ENCODE measurements at regions of chr19 and their contacts with region 1.

Region 1: DNA sequence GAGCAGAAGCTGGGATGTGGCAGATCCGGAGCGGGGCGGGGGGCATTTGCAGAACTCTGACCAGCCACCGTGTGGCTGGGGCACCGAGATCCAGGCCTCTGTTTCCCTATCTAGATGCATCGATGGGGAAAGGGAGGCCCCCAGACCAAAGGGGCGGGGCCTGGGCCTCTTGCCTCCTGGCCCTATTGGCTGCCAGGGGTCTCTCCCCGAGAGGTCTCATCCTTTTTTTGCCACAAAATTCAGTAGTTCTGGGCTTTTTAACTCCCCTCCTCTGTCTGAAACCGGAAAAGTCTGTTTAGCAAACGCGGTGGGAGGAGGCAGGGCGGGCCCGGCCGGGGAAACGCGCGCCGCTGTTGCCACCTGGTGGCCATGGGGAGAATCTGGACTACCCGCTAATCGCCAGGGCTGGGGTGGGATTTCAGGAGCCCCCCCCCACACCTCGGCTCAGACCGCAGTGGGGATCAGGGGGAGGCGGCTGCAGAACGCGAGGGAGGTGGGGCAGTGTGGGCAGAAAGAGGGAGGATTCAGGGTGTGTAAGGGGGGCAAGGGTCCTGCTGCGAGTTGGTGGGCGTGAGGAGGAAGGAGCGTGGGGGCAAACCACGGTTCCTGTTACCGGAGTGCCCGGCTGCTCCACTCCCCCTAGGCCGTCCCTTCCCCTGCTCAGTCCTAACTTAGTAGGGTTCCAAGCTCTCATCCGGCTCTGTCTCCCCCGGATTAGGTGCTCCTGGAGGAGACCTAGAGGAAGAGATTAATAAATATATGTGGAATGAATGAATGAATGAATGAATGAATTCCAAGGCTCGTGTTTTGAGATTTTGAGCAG is 28.3 kb downstream of the IL12RB1 start:
- DNase-seq: peak; percentile 72 to 88 (median 74)
- H3K4me3 ChIP-seq: no peak overlapping the region
- H3K4me3 Mint-ChIP-seq: peak overlapping the region in 3 of 7 donors; percentile 32 to 76 (median 42)
- H3K27ac ChIP-seq: peak overlapping the region; percentile 38
- H3K27ac Mint-ChIP-seq: peak overlapping the region in 7 of 8 donors; percentile 68 to 92 (median 84)
- H3K4me1 ChIP-seq: peaks cover 13% of the 10 kb centered on the region
- H3K4me1 Mint-ChIP-seq: peaks cover 7 to 15% (median 8%) of the 10 kb centered on the region in 3 donors
- H3K27me3 ChIP-seq: no peaks in the 10 kb centered on the region
- H3K27me3 Mint-ChIP-seq: peaks cover 0 to 1% of the 10 kb centered on the region in 2 donors

Region 2: DNA sequence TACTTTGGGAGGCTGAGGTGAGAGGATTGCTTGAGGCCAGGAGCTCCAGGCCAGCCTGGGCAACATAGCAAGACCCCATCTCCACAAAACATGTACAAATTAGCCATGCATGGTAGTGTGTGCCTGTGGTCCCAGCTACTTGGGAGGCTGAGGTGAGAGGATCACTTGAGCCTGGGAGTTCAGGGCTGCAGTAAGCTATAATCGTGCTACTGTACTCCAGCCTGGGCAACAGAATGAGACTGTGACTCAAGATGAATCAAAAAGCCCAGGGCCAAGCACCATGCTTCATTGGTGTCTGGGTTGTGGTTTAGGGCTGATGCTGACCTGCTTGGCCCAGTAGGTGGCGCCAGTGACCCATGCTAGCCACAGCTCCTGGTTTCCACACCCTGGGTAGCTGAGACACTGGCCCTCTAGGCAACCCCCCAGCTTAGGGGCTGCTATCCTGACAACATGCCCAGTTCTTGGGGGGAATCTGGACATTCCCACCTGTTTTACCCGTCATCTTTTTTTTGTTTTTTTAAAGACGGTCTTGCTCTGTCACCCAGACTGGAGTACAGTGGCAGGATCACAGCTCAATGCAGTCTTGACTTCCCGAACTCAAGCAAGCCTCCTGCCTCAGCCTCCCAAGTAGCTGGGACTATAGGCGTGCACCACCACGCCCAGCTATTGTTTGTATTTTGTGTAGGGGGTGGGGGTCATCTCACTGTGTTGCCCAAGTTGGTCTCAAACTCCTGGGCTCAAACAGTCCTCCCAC is 120.2 kb before region 1 on chr19:
- CTCF ChIA-PET with region 1: interaction called, 14 read pairs
- POLR2A ChIA-PET with region 1: no interaction called
- DNase-seq: peak; percentile 71 to 86 (median 76)
- H3K4me3 ChIP-seq: no peak overlapping the region
- H3K4me3 Mint-ChIP-seq: peak overlapping the region in 1 of 7 donors; percentile 26
- H3K27ac ChIP-seq: no peak overlapping the region
- H3K27ac Mint-ChIP-seq: peak overlapping the region in 2 of 8 donors; percentile 65 to 73
- H3K4me1 ChIP-seq: peaks cover 6% of the 10 kb centered on the region
- H3K4me1 Mint-ChIP-seq: peaks cover 7 to 17% (median 10%) of the 10 kb centered on the region in 3 donors
- H3K27me3 ChIP-seq: no peaks in the 10 kb centered on the region
- H3K27me3 Mint-ChIP-seq: no peaks in the 10 kb centered on the region

Region 3: GRCh38 chr19:18000935-18001778 is 57.3 kb before region 1 on chr19:
- CTCF ChIA-PET with region 1: interaction called, 168 read pairs
- POLR2A ChIA-PET with region 1: interaction called, 4 read pairs
- DNase-seq: peak; percentile 94 to 98 (median 98)
- H3K4me3 ChIP-seq: peak overlapping the region; percentile 90
- H3K4me3 Mint-ChIP-seq: peak overlapping the region; percentile 81 to 95 (median 90)
- H3K27ac ChIP-seq: peak overlapping the region; percentile 88
- H3K27ac Mint-ChIP-seq: peak overlapping the region; percentile 93 to 100 (median 98)
- H3K4me1 ChIP-seq: peaks cover 21% of the 10 kb centered on the region
- H3K4me1 Mint-ChIP-seq: peaks cover 19 to 44% (median 19%) of the 10 kb centered on the region in 3 donors
- H3K27me3 ChIP-seq: no peaks in the 10 kb centered on the region
- H3K27me3 Mint-ChIP-seq: no peaks in the 10 kb centered on the region

Region 4: GRCh38 chr19:18007044-18007916 is 51.1 kb before region 1 on chr19:
- CTCF ChIA-PET with region 1: interaction called, 168 read pairs
- POLR2A ChIA-PET with region 1: interaction called, 15 read pairs
- DNase-seq: peak; percentile 73 to 87 (median 74)
- H3K4me3 ChIP-seq: peak overlapping the region; percentile 70
- H3K4me3 Mint-ChIP-seq: peak overlapping the region; percentile 84 to 94 (median 88)
- H3K27ac ChIP-seq: peak overlapping the region; percentile 38
- H3K27ac Mint-ChIP-seq: peak overlapping the region; percentile 90 to 99 (median 97)
- H3K4me1 ChIP-seq: peaks cover 43% of the 10 kb centered on the region
- H3K4me1 Mint-ChIP-seq: peaks cover 17 to 39% (median 35%) of the 10 kb centered on the region in 3 donors
- H3K27me3 ChIP-seq: no peaks in the 10 kb centered on the region
- H3K27me3 Mint-ChIP-seq: peaks cover 0 to 2% of the 10 kb centered on the region in 2 donors

Region 5: GRCh38 chr19:18044825-18045304 is 13.6 kb before region 1 on chr19:
- CTCF ChIA-PET with region 1: interaction called, 14 read pairs
- POLR2A ChIA-PET with region 1: interaction called, 3 read pairs
- DNase-seq: peak; percentile 71 to 91 (median 81)
- H3K4me3 ChIP-seq: peak overlapping the region; percentile 68
- H3K4me3 Mint-ChIP-seq: peak overlapping the region; percentile 13 to 91 (median 84)
- H3K27ac ChIP-seq: peak overlapping the region; percentile 64
- H3K27ac Mint-ChIP-seq: peak overlapping the region; percentile 84 to 97 (median 93)
- H3K4me1 ChIP-seq: peaks cover 35% of the 10 kb centered on the region
- H3K4me1 Mint-ChIP-seq: peaks cover 31 to 47% (median 44%) of the 10 kb centered on the region in 3 donors
- H3K27me3 ChIP-seq: no peaks in the 10 kb centered on the region
- H3K27me3 Mint-ChIP-seq: no peaks in the 10 kb centered on the region

Region 6: DNA sequence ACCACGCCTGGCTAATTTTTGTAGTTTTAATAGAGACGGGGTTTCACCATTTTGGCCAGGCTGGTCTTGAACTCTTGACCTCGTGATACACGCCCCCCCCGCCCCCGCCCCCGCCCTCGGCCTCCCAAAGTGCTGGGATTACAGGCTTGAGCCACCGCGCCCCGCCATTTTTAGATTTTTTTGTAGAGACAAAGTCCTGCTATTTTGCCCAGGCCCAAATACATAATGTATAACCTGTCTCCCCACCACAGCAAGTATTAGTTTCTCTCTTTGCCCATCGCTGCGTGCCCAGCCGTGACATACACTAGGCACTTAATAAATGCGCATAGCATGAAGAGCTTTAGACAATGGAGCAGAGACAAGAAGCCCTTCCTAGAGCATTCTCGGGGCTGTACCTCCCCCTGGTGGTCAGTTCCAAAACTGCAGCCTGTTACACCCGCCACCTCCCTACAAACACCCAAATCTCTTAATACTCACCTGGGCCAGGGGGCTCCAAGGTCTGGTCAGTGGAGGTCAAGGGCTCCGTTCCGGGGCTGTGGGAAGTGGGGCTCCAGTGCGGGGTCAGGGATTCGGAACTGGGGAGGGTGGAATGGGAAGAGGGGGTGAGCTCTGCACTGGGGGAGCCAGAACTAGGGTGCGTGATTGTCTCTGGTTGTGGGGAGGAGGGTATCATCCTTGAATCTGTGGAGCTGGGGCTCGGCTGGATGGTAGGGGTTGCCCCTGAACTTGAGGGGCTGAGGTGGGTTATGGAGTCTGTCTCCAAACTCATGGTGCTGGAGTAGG is 193.4 kb after region 1 on chr19:
- CTCF ChIA-PET with region 1: interaction called, 11 read pairs
- POLR2A ChIA-PET with region 1: no interaction called
- DNase-seq: peak; percentile 66 to 85 (median 72)
- H3K4me3 ChIP-seq: no peak overlapping the region
- H3K4me3 Mint-ChIP-seq: no peak overlapping the region
- H3K27ac ChIP-seq: no peak overlapping the region
- H3K27ac Mint-ChIP-seq: no peak overlapping the region
- H3K4me1 ChIP-seq: no peaks in the 10 kb centered on the region
- H3K4me1 Mint-ChIP-seq: peaks cover 0 to 1% (median 0%) of the 10 kb centered on the region in 3 donors
- H3K27me3 ChIP-seq: peaks cover 8% of the 10 kb centered on the region
- H3K27me3 Mint-ChIP-seq: peaks cover 14 to 25% of the 10 kb centered on the region in 2 donors